GM12878 (cell line): ENCODE measurements at regions of chr9 and their contacts with region 1.

Region 1: GRCh38 chr9:87342743-87343142 is 154.9 kb upstream of the DAPK1 start:
- DNase-seq: no peak
- ATAC-seq: 0 out of 3 replicates have a peak, but pooled peaks have one; percentile 18
- H3K4me3 ChIP-seq: no peak overlapping the region
- H3K27ac ChIP-seq: no peak overlapping the region
- H3K4me1 ChIP-seq: no peaks in the 10 kb centered on the region
- H3K27me3 ChIP-seq: no peaks in the 10 kb centered on the region
- CTCF ChIP-seq: no peak
- EP300 ChIP-seq: no peak
- POLR2A ChIP-seq: no peak
- RAD21 ChIP-seq: no peak

Region 2: DNA sequence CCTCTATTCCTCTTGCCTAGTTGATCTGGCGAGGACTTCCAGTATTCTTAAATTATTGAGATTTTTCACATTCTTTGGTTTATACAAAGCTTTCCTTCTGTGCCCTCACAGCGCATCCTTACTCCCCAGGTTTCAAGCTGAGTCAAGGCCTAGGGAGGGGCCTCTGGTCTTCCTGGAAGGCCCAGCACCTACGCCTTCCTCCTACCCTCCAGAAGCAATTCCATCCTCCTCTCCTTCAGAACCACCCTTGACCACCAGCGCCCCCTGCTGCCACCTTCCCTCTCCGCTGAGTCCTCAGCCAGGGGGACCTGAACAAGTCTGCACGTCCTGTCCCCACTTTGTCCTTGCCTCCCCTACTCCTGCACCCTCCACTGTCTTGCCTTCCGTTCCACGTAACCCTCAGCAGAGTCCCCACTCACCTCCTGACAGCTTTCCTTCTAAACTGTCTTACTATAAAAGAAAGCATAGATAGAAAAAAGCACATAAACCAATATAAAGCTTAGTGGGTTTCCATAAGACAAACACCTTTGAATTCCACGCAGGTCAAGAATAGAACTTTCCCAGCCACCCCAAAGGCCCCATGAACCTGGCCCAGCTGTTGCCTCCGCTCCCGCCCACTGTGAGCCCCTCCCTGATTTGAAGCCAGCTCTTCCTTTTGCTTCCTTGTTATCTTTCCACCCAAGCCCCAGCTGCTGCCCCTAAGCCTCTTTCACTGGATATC is 320.2 kb after region 1 on chr9:
- CTCF ChIA-PET with region 1: interaction called, 59 read pairs
- POLR2A ChIA-PET with region 1: no interaction called
- RAD21 ChIA-PET with region 1: interaction called, 14 read pairs
- SMC1A ChIA-PET with region 1: interaction called, 26 read pairs
- in situ Hi-C with region 1: loop called (anchors 5 kb)
- intact Hi-C with region 1: loop called (anchors 1 kb)
- DNase-seq: no peak
- ATAC-seq: peak; percentile 88
- H3K4me3 ChIP-seq: no peak overlapping the region
- H3K27ac ChIP-seq: no peak overlapping the region
- H3K4me1 ChIP-seq: no peaks in the 10 kb centered on the region
- H3K27me3 ChIP-seq: no peaks in the 10 kb centered on the region
- CTCF ChIP-seq: peak; percentile 78 to 85 (median 81)
- EP300 ChIP-seq: no peak
- POLR2A ChIP-seq: no peak
- RAD21 ChIP-seq: peak; percentile 87